ENCODE measurements at regions of chr17 and their contacts with region 1.

Region 1: DNA sequence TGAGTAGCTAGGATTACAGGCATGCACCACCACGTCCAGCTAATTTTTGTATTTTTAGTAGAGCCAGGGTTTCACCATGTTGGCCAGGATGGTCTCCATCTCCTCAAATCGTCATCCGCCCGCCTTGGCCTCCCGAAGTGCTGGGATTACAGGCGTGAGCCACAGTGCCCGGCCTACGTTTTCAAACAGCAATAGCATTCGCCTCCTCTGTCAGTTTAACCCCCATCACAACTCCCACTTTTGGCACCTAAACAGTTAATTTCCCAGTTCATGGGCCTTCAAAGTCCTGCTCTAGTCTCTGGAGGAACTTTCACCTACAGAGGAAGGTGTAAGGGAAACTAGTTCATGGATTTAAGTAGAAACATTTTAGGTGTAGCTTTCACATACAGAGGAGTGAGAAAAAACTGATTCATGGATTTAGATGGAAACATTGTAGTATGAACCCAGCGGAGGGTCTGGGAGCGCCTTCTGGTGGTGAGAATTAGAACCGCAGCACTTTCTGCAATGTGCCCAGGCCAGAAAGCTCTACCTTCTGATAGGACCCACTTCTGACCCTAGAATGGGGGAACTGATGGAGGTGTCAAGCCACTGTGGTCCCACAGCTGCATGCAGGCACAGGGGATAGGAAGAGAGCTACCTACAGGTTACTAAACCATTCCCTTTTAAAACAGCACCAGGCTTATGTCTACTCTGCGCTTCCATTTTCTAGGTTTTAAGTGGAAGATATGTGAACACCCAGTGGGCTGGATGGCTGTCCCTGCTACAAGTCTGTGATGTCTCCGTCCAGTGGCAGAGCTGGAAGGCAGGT is 12.0 kb upstream of the MEOX1 start:
- DNase-seq: no peak
- ATAC-seq: peak; percentile 48
- H3K4me3 ChIP-seq: no peak overlapping the region
- H3K27ac ChIP-seq: no peak overlapping the region
- H3K4me1 ChIP-seq: peaks cover 42% of the 10 kb centered on the region
- H3K27me3 ChIP-seq: no peaks in the 10 kb centered on the region
- CTCF ChIP-seq: peak; percentile 92 to 97 (median 94)
- EP300 ChIP-seq: no peak
- POLR2A ChIP-seq: no peak
- RAD21 ChIP-seq: peak; percentile 76

Region 2: DNA sequence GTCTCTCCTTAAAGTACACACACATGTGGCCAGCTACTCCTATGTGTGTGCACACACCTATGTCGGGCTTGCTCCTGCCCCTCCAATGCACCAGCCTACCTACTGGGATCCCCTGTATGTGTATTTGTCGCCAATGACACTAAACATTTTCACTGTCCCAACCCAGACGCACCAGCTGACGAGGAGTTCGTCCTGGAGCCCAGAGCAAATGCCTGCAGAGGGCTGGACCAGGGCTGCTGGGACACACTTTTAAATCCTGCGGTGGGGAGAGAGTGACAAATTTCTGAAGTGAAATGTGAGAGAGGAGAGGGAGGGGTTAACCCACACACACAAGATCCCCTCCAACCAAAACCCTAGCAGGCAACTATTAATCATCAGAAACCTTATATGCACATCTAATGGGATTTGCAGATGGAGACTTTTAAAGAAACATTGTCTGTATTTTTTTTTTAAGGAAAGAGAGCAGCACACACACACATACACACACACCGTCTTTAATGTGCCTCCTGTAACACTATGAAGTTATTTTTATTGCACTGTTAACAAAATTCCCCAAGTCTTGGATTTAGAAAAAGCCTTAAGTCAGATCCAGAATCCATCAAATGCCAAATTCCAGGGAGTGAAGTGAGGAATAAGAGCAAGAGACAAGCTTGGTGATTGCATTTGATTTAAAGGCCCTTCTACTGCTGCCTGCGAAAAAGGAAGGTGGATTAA is 11.9 kb before region 1 on chr17 and contains the start of gene MEOX1:
- CTCF ChIA-PET with region 1: interaction called, 55 read pairs
- POLR2A ChIA-PET with region 1: interaction called, 7 read pairs
- RAD21 ChIA-PET with region 1: interaction called, 41 read pairs
- SMC1A ChIA-PET with region 1: interaction called, 33 read pairs
- in situ Hi-C with region 1: no loop called
- intact Hi-C with region 1: loop called (anchors 1 kb)
- DNase-seq: peak; percentile 79
- ATAC-seq: peak; percentile 89
- H3K4me3 ChIP-seq: peak within 1 kb of the TSS; percentile 69
- H3K27ac ChIP-seq: peak within 1 kb of the TSS; percentile 71
- H3K4me1 ChIP-seq: peaks cover 16% of the 10 kb centered on the region
- H3K27me3 ChIP-seq: no peaks in the 10 kb centered on the region
- CTCF ChIP-seq: no peak
- EP300 ChIP-seq: peak in 1 of 2 experiments; percentile 33; a peak in 1 of 4 replicates
- POLR2A ChIP-seq: no peak
- RAD21 ChIP-seq: no peak
- polyA plus RNA-seq, gene MEOX1: 0.19 to 0.24 TPM

Region 3: GRCh38 chr17:43861024-43861621 is 187.4 kb after region 1 on chr17:
- CTCF ChIA-PET with region 1: no interaction called
- POLR2A ChIA-PET with region 1: no interaction called
- RAD21 ChIA-PET with region 1: no interaction called
- SMC1A ChIA-PET with region 1: no interaction called
- in situ Hi-C with region 1: no loop called
- intact Hi-C with region 1: no loop called
- DNase-seq: no peak
- ATAC-seq: no peak
- H3K4me3 ChIP-seq: no peak overlapping the region
- H3K27ac ChIP-seq: no peak overlapping the region
- H3K4me1 ChIP-seq: no peaks in the 10 kb centered on the region
- H3K27me3 ChIP-seq: no peaks in the 10 kb centered on the region; a peak in 2 of 4 replicates
- CTCF ChIP-seq: no peak
- EP300 ChIP-seq: no peak
- POLR2A ChIP-seq: no peak
- RAD21 ChIP-seq: no peak

Measured in GM12878 (cell line).